Dorsolateral prefrontal cortex (tissue), 120 donors: ENCODE measurements at regions of chr11 and their contacts with region 1.

Region 1: DNA sequence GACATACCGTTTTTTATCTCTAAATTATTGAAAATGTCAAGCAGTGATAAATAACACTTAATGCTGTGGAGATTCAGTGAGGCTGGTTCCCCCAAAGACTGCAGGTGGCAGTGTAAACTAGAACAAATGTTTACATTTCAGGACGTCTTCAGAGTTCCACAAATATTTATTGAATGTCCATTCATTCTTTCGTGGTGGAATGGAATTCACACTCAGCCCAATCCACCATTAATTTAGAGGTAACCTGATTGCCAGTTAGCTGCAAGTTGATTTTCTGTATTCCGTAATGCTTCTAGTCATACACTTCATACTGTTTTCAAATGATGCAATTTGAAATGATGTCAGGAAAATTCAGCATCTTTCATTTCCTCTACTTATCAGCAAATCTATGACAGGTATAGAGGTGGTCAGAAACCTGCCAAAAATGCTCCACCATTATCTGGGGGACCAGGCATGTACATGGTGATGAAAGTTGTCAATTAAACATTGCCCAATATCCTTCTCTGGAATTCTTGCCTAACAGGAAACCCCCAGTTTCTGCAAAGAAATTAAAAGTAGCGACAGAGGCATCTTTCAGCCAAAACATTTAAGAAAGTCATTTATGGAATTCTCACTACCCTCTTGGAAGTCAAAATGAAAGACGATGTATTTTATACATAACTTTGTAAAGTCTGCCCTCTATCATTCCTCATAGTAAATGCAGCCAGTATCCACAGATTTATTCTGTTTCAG is 94.3 kb upstream of the BMAL1 start:
- DNase-seq: peak in 1 of 10 donors; percentile 42
- H3K4me3 ChIP-seq: peak overlapping the region in 58 of 59 donors; percentile 1 to 66 (median 42)
- H3K27ac ChIP-seq: no peak overlapping the region
- H3K27me3 ChIP-seq: no peaks in the 10 kb centered on the region
- CTCF ChIP-seq: peak; percentile 23 to 70 (median 57)

Region 2: DNA sequence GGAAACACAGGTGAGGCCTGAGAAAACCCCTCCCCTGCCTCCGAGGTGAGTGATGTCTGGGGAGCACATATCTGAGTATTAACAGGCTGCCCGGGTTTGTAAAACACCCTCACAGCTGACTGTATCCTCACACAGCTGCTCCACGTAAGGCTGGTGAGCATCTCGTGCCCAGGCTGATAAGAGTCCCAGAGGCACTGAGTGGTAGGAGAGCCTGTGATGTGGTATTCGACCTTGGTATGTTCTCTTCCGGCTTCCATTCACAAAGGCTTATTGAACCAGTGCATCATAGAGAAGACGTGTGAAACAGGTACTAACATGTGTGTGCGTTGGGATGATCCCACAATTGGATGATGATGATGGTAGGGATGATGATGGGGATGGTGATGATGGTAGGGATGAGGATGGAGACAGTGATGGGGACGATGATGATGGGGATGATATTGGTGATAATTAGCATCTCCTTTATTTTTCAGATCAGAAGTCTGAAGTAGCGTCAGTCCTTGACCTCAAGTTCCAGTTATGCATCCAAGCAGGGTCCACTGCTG is 102.3 kb before region 1 on chr11:
- intact Hi-C with region 1: no loop called
- DNase-seq: no peak
- H3K4me3 ChIP-seq: no peak overlapping the region
- H3K27ac ChIP-seq: no peak overlapping the region
- H3K27me3 ChIP-seq: peaks cover 0 to 54% (median 15%) of the 10 kb centered on the region in 45 donors
- CTCF ChIP-seq: no peak

Region 3: GRCh38 chr11:13140028-13140870 is 43.0 kb before region 1 on chr11:
- intact Hi-C with region 1: no loop called
- DNase-seq: no peak
- H3K4me3 ChIP-seq: no peak overlapping the region
- H3K27ac ChIP-seq: peak overlapping the region in 7 of 59 donors; percentile 9 to 42 (median 15)
- H3K27me3 ChIP-seq: peaks cover 0 to 3% (median 0%) of the 10 kb centered on the region in 45 donors
- CTCF ChIP-seq: no peak

Region 4: GRCh38 chr11:13193613-13194012 is 10.4 kb after region 1 on chr11:
- intact Hi-C with region 1: no loop called
- DNase-seq: no peak
- H3K4me3 ChIP-seq: no peak overlapping the region
- H3K27ac ChIP-seq: no peak overlapping the region
- H3K27me3 ChIP-seq: peaks cover 0 to 4% (median 0%) of the 10 kb centered on the region in 45 donors
- CTCF ChIP-seq: no peak

Region 5: GRCh38 chr11:13343931-13344717 is 160.9 kb after region 1 on chr11:
- intact Hi-C with region 1: loop called in 1 of 2 experiments (anchors 2 kb)
- DNase-seq: peak in 6 of 10 donors; percentile 54 to 73 (median 59)
- H3K4me3 ChIP-seq: no peak overlapping the region
- H3K27ac ChIP-seq: no peak overlapping the region
- H3K27me3 ChIP-seq: no peaks in the 10 kb centered on the region
- CTCF ChIP-seq: peak; percentile 67 to 91 (median 82)

Region 6: GRCh38 chr11:13462901-13463778 is 279.9 kb after region 1 on chr11 and contains the start of gene BTBD10:
- intact Hi-C with region 1: loop called in 1 of 2 experiments (anchors 10 kb)
- DNase-seq: peak; percentile 74 to 96 (median 91)
- H3K4me3 ChIP-seq: peak within 1 kb of the TSS; percentile 60 to 97 (median 88)
- H3K27ac ChIP-seq: peak within 1 kb of the TSS in 57 of 59 donors; percentile 21 to 94 (median 82)
- H3K27me3 ChIP-seq: no peaks in the 10 kb centered on the region
- CTCF ChIP-seq: peak in 42 of 56 donors; percentile 6 to 63 (median 31)
- total RNA-seq, gene BTBD10: 59.2 to 140 (median 103) TPM